ENCODE measurements at regions of chr10 and their contacts with region 1.

Region 1: GRCh38 chr10:14822879-14823755 is 14.7 kb downstream of the CDNF start:
- DNase-seq: peak; percentile 56
- H3K4me3 Mint-ChIP-seq: no peak overlapping the region
- H3K27ac Mint-ChIP-seq: no peak overlapping the region
- H3K4me1 Mint-ChIP-seq: peaks cover 2% of the 10 kb centered on the region
- H3K27me3 Mint-ChIP-seq: peaks cover 1% of the 10 kb centered on the region

Region 2: DNA sequence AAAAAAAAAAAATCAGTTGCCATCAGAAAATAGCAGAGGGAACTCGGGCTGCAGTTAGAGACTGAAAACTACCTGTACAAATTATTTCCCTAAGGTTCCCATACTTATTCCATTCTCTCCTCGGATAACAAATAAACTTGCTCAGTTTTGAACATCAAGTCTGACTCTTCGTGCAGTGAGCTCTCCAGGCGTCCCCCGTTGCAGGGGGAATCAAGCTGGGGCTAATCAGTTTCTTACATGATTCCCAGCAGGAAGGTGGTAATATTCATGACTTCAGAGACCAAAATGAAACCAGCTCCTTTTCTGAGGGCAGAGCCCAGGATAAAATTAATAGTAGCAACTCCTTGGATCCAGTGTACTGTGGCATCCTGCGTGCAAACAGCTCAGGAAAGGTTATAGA is 627.7 kb before region 1 on chr10:
- CTCF ChIA-PET with region 1: interaction called, 3 read pairs
- POLR2A ChIA-PET with region 1: no interaction called
- intact Hi-C with region 1: loop called (anchors 5 kb)
- DNase-seq: no peak
- H3K4me3 Mint-ChIP-seq: no peak overlapping the region
- H3K27ac Mint-ChIP-seq: no peak overlapping the region
- H3K4me1 Mint-ChIP-seq: no peaks in the 10 kb centered on the region
- H3K27me3 Mint-ChIP-seq: peaks cover 38% of the 10 kb centered on the region

Region 3: GRCh38 chr10:14500172-14500765 is 322.8 kb before region 1 on chr10:
- CTCF ChIA-PET with region 1: interaction called, 15 read pairs
- POLR2A ChIA-PET with region 1: no interaction called
- intact Hi-C with region 1: loop called (anchors 1 kb)
- DNase-seq: no peak
- H3K4me3 Mint-ChIP-seq: no peak overlapping the region
- H3K27ac Mint-ChIP-seq: no peak overlapping the region
- H3K4me1 Mint-ChIP-seq: peaks cover 2% of the 10 kb centered on the region
- H3K27me3 Mint-ChIP-seq: no peaks in the 10 kb centered on the region

Region 4: DNA sequence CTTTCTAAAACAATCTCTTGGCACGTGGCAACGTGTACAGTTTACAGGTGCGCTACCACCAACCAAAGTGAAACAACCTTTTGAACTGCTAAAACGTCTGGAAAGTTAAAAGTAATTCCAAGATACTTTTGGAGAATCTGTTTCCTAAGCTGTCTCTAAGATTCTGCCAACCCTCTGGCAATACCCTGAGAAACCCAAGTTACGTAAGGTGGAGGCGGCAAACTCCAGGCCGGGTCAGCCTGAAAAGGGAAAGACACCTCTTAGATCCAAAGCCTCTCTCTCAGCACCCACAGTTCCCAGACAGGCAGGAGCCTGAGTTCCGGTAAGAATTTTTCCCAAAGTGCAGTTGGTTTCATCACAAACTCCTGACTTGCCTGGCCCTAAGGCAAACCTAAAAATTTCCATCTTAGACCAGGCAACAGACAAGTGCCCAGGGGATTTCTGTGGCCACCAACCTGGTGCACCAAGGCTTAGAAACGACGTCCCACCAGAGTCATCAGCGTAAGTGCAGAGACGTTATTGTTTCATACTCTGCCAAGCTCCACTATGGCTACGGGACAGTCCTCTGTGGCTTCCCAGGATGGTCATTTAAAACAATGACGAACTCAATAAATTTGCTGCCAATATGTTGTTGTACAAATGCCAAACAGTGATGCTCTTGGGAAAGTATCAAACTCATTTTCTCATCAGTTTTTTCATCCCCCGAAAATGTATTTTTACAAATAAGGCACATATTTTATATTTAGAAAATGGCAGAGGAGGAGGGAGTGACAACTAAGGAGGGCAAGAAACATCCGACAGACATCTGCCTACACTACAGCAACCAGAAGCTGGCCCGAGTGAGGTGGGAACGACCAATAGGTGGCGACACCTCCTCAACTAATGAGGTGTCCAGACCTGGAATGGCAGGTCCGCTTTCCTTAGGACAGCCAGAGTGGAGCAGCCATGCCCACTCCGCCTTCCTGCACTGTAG is 286.6 kb before region 1 on chr10:
- CTCF ChIA-PET with region 1: interaction called, 23 read pairs
- POLR2A ChIA-PET with region 1: no interaction called
- intact Hi-C with region 1: loop called (anchors 5 kb)
- DNase-seq: peak; percentile 67
- H3K4me3 Mint-ChIP-seq: no peak overlapping the region
- H3K27ac Mint-ChIP-seq: peak overlapping the region; percentile 19
- H3K4me1 Mint-ChIP-seq: peaks cover 83% of the 10 kb centered on the region
- H3K27me3 Mint-ChIP-seq: no peaks in the 10 kb centered on the region

Region 5: GRCh38 chr10:14806318-14806717 is 16.8 kb before region 1 on chr10:
- CTCF ChIA-PET with region 1: no interaction called
- POLR2A ChIA-PET with region 1: no interaction called
- intact Hi-C with region 1: no loop called
- DNase-seq: no peak
- H3K4me3 Mint-ChIP-seq: no peak overlapping the region
- H3K27ac Mint-ChIP-seq: no peak overlapping the region
- H3K4me1 Mint-ChIP-seq: peaks cover 3% of the 10 kb centered on the region
- H3K27me3 Mint-ChIP-seq: no peaks in the 10 kb centered on the region